ENCODE measurements at regions of chr21 and their contacts with region 1.

Region 1: GRCh38 chr21:41612674-41613532 is 104.9 kb upstream of the TMPRSS2 start:
- DNase-seq: peak; percentile 50 to 75
- ATAC-seq: peak; percentile 79 to 91
- H3K4me3 ChIP-seq: no peak overlapping the region
- H3K27ac ChIP-seq: peak overlapping the region; percentile 72 to 85
- H3K4me1 ChIP-seq: peaks cover 28% of the 10 kb centered on the region
- CTCF ChIP-seq: peak; percentile 65
- EP300 ChIP-seq: no peak
- POLR2A ChIP-seq: no peak
- RAD21 ChIP-seq: peak; percentile 85 to 97

Region 2: GRCh38 chr21:41622831-41623548 is 10.1 kb after region 1 on chr21:
- CTCF ChIA-PET with region 1: interaction called, 72 read pairs
- POLR2A ChIA-PET with region 1: no interaction called
- DNase-seq: no peak
- ATAC-seq: no peak
- H3K4me3 ChIP-seq: no peak overlapping the region
- H3K27ac ChIP-seq: peak overlapping the region in 1 of 2 experiments; percentile 71; a peak in 3 of 6 replicates
- H3K4me1 ChIP-seq: peaks cover 19% of the 10 kb centered on the region; the same call in 2 of the 3 replicates
- CTCF ChIP-seq: no peak
- EP300 ChIP-seq: no peak
- POLR2A ChIP-seq: no peak
- RAD21 ChIP-seq: no peak

Region 3: DNA sequence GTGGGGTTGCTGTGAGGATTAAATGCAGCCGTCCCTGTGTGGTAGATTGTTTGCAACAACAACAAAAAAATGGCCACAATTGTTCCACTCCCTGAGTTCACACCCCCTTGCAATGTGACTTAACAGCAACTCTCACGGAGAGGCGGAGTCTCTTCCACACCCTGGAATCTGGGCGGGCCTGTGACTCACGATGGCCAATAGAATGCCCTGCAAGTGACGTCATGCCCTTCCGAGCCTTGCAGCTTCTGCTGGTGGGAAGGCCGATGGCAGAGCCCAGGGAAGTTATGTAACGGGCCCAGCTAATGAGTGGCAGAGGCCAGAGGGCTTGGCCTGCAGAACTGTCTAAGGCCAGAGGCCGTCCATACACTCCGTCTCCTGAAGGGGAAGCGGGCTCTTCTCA is 66.0 kb after region 1 on chr21:
- CTCF ChIA-PET with region 1: interaction called, 20 read pairs
- POLR2A ChIA-PET with region 1: interaction called, 10 read pairs
- DNase-seq: peak; percentile 90 to 99
- ATAC-seq: peak; percentile 88
- H3K4me3 ChIP-seq: peak overlapping the region; percentile 50
- H3K27ac ChIP-seq: peak overlapping the region; percentile 98
- H3K4me1 ChIP-seq: peaks cover 60% of the 10 kb centered on the region
- CTCF ChIP-seq: no peak
- EP300 ChIP-seq: no peak
- POLR2A ChIP-seq: peak; percentile 57
- RAD21 ChIP-seq: 0 out of 5 replicates have a peak, but pooled peaks of 1 of the 2 experiments have one; percentile 6

Region 4: DNA sequence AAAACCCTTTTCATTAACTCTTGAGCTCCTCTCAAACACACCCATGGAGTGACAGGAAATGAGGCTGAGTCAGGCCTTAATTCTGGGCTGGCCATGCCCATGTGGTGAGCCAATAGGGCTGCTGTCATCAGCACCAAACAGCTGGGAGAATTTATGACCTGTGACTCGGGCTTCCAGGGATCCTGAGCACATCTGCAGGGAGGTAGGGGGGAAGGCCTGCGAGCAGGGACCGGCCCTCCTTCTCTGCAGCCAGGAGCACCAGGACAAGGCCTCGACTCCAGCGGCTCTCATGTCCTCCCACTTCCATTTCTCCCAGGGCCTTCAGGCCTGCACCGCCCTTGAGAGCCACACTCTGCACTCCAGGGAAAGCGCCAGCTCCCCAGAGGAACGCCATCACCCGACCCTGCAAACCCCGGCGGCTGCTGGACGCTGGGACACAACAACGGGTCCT is 139.4 kb after region 1 on chr21:
- CTCF ChIA-PET with region 1: interaction called, 19 read pairs
- POLR2A ChIA-PET with region 1: no interaction called
- DNase-seq: no peak
- ATAC-seq: peak in 1 of 2 experiments; percentile 29; a peak in 2 of 6 replicates
- H3K4me3 ChIP-seq: no peak overlapping the region
- H3K27ac ChIP-seq: peak overlapping the region in 1 of 2 experiments; percentile 71; a peak in 2 of 6 replicates
- H3K4me1 ChIP-seq: peaks cover 34% of the 10 kb centered on the region
- CTCF ChIP-seq: no peak
- EP300 ChIP-seq: no peak
- POLR2A ChIP-seq: no peak
- RAD21 ChIP-seq: no peak

Region 5: GRCh38 chr21:41783441-41784161 is 170.7 kb after region 1 on chr21:
- CTCF ChIA-PET with region 1: interaction called, 189 read pairs
- POLR2A ChIA-PET with region 1: interaction called, 12 read pairs
- DNase-seq: peak in 1 of 2 experiments; percentile 68
- ATAC-seq: peak; percentile 86 to 87
- H3K4me3 ChIP-seq: no peak overlapping the region
- H3K27ac ChIP-seq: peak overlapping the region; percentile 44 to 58; a peak in 5 of 6 replicates
- H3K4me1 ChIP-seq: peaks cover 22% of the 10 kb centered on the region
- CTCF ChIP-seq: no peak
- EP300 ChIP-seq: no peak
- POLR2A ChIP-seq: no peak
- RAD21 ChIP-seq: no peak

Region 6: GRCh38 chr21:42107881-42108553 is 495.1 kb after region 1 on chr21:
- CTCF ChIA-PET with region 1: interaction called, 14 read pairs
- POLR2A ChIA-PET with region 1: no interaction called
- DNase-seq: peak; percentile 51 to 76
- ATAC-seq: peak; percentile 96 to 99
- H3K4me3 ChIP-seq: no peak overlapping the region
- H3K27ac ChIP-seq: no peak overlapping the region
- H3K4me1 ChIP-seq: no peaks in the 10 kb centered on the region
- CTCF ChIP-seq: peak; percentile 50
- EP300 ChIP-seq: no peak
- POLR2A ChIP-seq: no peak
- RAD21 ChIP-seq: peak; percentile 61 to 64